ENCODE measurements at regions of chr7 and their contacts with region 1.

Region 1: GRCh38 chr7:143240291-143241168 is 18.7 kb downstream of the TAS2R40 start:
- DNase-seq: peak; percentile 34 to 87 (median 67)
- ATAC-seq: peak; percentile 83 to 94 (median 88)
- H3K4me3 ChIP-seq: no peak overlapping the region
- H3K4me3 Mint-ChIP-seq: no peak overlapping the region
- H3K27ac ChIP-seq: no peak overlapping the region
- H3K27ac Mint-ChIP-seq: peak overlapping the region; percentile 44 to 81
- H3K4me1 ChIP-seq: peaks cover 7 to 12% of the 10 kb centered on the region in 2 experiments
- H3K4me1 Mint-ChIP-seq: peaks cover 31 to 38% (median 33%) of the 10 kb centered on the region in 3 donors
- H3K27me3 ChIP-seq: peaks cover 0 to 6% of the 10 kb centered on the region in 2 experiments
- H3K27me3 Mint-ChIP-seq: peaks cover 9% of the 10 kb centered on the region in 2 donors

Region 2: GRCh38 chr7:143181349-143181748 is 59.2 kb before region 1 on chr7:
- CTCF ChIA-PET with region 1: no interaction called
- POLR2A ChIA-PET with region 1: no interaction called
- DNase-seq: no peak
- ATAC-seq: no peak
- H3K4me3 ChIP-seq: no peak overlapping the region
- H3K4me3 Mint-ChIP-seq: no peak overlapping the region
- H3K27ac ChIP-seq: no peak overlapping the region
- H3K27ac Mint-ChIP-seq: no peak overlapping the region
- H3K4me1 ChIP-seq: no peaks in the 10 kb centered on the region
- H3K4me1 Mint-ChIP-seq: no peaks in the 10 kb centered on the region
- H3K27me3 ChIP-seq: no peaks in the 10 kb centered on the region
- H3K27me3 Mint-ChIP-seq: peaks cover 19% of the 10 kb centered on the region in 2 donors

Region 3: DNA sequence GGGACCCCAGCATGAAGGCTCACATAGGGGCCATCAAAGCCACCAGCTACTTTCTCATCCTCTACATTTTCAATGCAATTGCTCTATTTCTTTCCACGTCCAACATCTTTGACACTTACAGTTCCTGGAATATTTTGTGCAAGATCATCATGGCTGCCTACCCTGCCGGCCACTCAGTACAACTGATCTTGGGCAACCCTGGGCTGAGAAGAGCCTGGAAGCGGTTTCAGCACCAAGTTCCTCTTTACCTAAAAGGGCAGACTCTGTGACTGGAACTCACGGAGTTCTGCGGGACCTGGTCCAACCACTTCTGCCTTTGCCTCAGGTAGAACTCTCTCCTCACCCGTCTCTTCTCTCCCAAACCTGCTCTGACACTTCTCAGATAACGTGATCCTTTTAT is 17.7 kb before region 1 on chr7:
- CTCF ChIA-PET with region 1: interaction called, 5 to 10 read pairs
- POLR2A ChIA-PET with region 1: no interaction called
- DNase-seq: peak in 3 of 35 experiments; percentile 4 to 37 (median 15)
- ATAC-seq: no peak
- H3K4me3 ChIP-seq: no peak overlapping the region
- H3K4me3 Mint-ChIP-seq: no peak overlapping the region
- H3K27ac ChIP-seq: no peak overlapping the region
- H3K27ac Mint-ChIP-seq: no peak overlapping the region
- H3K4me1 ChIP-seq: no peaks in the 10 kb centered on the region
- H3K4me1 Mint-ChIP-seq: no peaks in the 10 kb centered on the region
- H3K27me3 ChIP-seq: peaks cover 0 to 12% of the 10 kb centered on the region in 2 experiments
- H3K27me3 Mint-ChIP-seq: peaks cover 20 to 23% of the 10 kb centered on the region in 2 donors

Region 4: DNA sequence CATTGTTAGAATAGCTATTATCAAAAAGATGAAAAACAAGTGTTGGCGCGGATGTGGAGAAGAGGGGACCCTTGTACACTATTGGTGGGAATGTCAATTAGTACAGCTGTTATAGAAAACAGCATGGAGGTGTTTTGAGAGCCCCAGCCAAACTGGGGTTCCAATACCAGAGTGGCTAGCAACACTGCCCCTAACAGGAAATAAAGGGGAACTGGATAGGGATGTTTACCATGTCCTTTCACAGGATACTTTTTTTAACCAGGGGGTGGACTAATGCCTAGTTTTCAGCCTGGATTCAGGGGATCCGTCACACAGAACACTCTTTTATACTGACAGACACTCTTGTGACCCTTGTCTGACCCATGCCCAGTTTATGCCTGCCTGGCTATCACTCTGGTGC is 15.8 kb after region 1 on chr7:
- CTCF ChIA-PET with region 1: interaction called, 16 to 24 read pairs
- POLR2A ChIA-PET with region 1: interaction called in 1 of 2 experiments, 3 read pairs
- DNase-seq: no peak
- ATAC-seq: no peak
- H3K4me3 ChIP-seq: no peak overlapping the region
- H3K4me3 Mint-ChIP-seq: peak overlapping the region in 1 of 3 donors; percentile 9
- H3K27ac ChIP-seq: peak overlapping the region; percentile 4
- H3K27ac Mint-ChIP-seq: peak overlapping the region; percentile 78 to 88
- H3K4me1 ChIP-seq: peaks cover 17 to 38% of the 10 kb centered on the region in 2 experiments
- H3K4me1 Mint-ChIP-seq: peaks cover 81 to 82% (median 81%) of the 10 kb centered on the region in 3 donors
- H3K27me3 ChIP-seq: no peaks in the 10 kb centered on the region
- H3K27me3 Mint-ChIP-seq: no peaks in the 10 kb centered on the region

Region 5: DNA sequence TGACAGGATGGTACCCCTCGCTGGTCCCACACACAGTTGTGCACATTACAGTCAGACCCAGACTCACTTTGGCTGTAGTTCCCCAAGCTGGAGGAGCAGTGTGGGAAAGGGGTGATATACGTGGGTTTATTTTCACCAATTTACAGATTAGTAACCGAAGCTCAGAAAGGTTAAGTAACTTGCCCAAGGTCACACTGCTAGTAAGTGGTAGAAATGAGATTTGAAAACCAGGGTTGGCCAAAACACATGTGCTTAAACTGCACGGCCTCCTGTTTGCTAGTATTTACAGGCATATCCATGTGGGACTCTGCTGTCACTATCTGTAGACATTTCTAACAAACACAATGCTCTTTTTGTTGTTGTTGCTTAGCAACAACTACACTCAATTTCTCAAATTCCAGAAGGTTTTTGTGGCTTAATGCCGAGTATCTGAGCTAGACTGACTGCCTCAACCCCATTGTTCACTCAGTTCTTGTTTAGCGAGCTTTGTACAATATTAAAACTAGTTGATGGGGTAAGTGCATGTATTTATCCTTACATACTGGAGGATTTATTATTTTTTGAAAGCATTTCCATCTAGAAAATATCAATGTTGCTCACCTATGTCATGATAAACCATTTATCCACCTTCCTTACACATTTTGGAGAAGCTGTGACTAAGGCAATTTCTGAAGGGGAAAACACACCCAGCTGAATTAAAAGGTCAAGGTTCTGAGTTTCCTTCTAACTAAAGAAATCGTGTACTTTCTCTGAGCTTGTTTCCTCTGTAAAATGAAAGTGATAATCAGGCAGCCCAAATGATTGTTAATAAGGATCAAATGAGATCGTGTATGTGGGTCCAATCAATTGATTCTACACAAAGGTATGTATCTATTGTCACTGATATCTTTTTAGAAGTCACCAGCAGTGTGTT is 38.9 kb after region 1 on chr7:
- CTCF ChIA-PET with region 1: interaction called, 7 to 11 read pairs
- POLR2A ChIA-PET with region 1: no interaction called
- DNase-seq: peak in 2 of 35 experiments; percentile 3 to 59
- ATAC-seq: peak; percentile 51 to 88 (median 60)
- H3K4me3 ChIP-seq: peak overlapping the region in 1 of 2 donors; percentile 25
- H3K4me3 Mint-ChIP-seq: peak overlapping the region; percentile 32 to 74 (median 68)
- H3K27ac ChIP-seq: peak overlapping the region; percentile 78
- H3K27ac Mint-ChIP-seq: peak overlapping the region; percentile 82 to 94
- H3K4me1 ChIP-seq: peaks cover 18 to 22% of the 10 kb centered on the region in 2 experiments
- H3K4me1 Mint-ChIP-seq: peaks cover 37 to 41% (median 39%) of the 10 kb centered on the region in 3 donors
- H3K27me3 ChIP-seq: no peaks in the 10 kb centered on the region
- H3K27me3 Mint-ChIP-seq: no peaks in the 10 kb centered on the region

Region 6: GRCh38 chr7:143299840-143300239 is 59.3 kb after region 1 on chr7:
- CTCF ChIA-PET with region 1: interaction called, 50 to 98 read pairs
- POLR2A ChIA-PET with region 1: interaction called in 1 of 2 experiments, 4 read pairs
- DNase-seq: peak; percentile 29 to 78 (median 62)
- ATAC-seq: peak; percentile 94 to 99 (median 98)
- H3K4me3 ChIP-seq: no peak overlapping the region
- H3K4me3 Mint-ChIP-seq: no peak overlapping the region
- H3K27ac ChIP-seq: no peak overlapping the region
- H3K27ac Mint-ChIP-seq: peak overlapping the region; percentile 77 to 79
- H3K4me1 ChIP-seq: peaks cover 10% of the 10 kb centered on the region in 2 experiments
- H3K4me1 Mint-ChIP-seq: peaks cover 42 to 45% (median 45%) of the 10 kb centered on the region in 3 donors
- H3K27me3 ChIP-seq: no peaks in the 10 kb centered on the region
- H3K27me3 Mint-ChIP-seq: no peaks in the 10 kb centered on the region

Region 7: DNA sequence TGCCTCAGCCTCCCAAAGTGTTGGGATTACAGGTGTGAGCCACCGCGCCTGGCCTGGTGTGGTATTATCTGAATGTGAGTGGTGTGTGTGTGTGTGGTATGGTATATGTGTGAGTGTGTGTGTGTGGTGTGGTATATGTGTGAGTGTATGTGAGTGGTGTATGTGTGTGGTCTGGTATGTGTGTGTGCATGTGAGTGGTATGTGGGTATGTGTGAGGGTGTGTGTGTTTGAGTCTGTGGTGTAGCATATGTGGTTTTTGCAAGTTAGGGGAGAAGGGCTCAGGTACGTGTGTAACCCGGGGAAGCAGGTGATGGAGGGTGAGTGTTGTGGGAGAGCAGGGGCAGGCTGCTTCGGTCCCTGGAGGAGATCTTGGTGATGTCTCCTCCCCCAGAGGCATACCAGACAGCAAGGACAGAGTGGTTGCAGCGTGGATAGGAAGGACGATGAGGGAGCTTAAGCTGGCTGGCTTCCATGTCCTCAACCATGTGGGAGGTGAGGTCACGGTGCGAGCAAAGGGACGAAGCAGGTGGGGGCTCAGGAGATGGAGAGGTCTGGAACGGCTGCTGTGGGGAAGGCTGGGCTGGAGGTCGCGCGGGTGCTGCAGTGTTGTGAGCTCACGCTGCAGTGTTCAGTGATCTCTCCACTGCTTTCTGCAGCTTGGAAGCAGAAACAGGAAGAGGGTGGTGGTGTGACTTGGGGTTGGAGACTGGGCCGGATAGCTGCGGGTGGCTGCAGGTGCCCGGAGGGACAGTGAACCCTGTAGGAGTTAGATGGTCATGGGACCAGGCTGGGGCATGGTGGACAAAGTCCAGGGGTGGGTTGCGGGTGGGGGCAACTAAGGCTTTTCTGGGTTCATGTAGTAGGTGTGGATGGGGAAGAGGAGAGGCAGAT is 145.6 kb after region 1 on chr7:
- CTCF ChIA-PET with region 1: interaction called, 4 to 10 read pairs
- POLR2A ChIA-PET with region 1: no interaction called
- DNase-seq: peak in 24 of 35 experiments; percentile 24 to 66 (median 38)
- ATAC-seq: peak; percentile 60 to 68 (median 66)
- H3K4me3 ChIP-seq: peak overlapping the region; percentile 2 to 33
- H3K4me3 Mint-ChIP-seq: no peak overlapping the region
- H3K27ac ChIP-seq: peak overlapping the region; percentile 52
- H3K27ac Mint-ChIP-seq: no peak overlapping the region
- H3K4me1 ChIP-seq: peaks cover 21 to 74% of the 10 kb centered on the region in 2 experiments
- H3K4me1 Mint-ChIP-seq: peaks cover 13 to 18% (median 15%) of the 10 kb centered on the region in 3 donors
- H3K27me3 ChIP-seq: no peaks in the 10 kb centered on the region
- H3K27me3 Mint-ChIP-seq: no peaks in the 10 kb centered on the region

Region 8: DNA sequence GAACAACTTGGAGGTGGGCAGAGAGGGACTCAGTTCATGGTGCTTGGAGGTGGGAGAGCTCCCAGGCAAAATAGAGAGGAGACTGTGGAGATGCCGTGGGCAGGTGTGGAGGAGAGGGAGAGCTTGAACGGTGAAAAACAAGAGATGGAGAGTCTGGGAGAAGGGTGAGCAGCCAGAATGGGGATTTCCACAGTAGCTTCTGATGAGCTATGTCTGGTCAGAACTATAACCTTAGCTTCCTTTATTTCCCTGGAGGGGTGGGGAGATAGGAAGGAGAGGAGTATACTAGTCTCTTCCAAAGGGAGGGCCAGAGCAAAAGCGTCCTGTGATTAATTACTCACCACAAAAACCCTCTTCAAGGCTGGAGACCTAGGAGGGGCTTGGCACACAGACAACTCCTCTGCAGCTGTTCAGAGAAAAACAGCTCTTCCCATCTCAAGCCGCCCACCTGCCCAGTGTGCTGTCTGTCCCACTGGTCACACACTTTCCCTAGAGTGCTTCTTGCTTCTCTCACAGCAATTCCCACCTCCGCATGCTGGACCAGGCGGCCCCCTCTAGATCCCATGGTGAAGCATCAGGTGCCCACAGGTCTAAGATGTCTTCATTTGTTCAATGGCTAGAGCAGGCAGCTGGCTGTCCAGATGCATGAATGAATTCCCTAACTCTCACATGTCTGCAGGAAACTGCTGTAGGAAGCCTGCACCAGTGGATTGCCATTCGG is 279.0 kb after region 1 on chr7:
- CTCF ChIA-PET with region 1: no interaction called
- POLR2A ChIA-PET with region 1: no interaction called
- DNase-seq: no peak
- ATAC-seq: no peak
- H3K4me3 ChIP-seq: no peak overlapping the region
- H3K4me3 Mint-ChIP-seq: no peak overlapping the region
- H3K27ac ChIP-seq: no peak overlapping the region
- H3K27ac Mint-ChIP-seq: no peak overlapping the region
- H3K4me1 ChIP-seq: no peaks in the 10 kb centered on the region
- H3K4me1 Mint-ChIP-seq: no peaks in the 10 kb centered on the region
- H3K27me3 ChIP-seq: peaks cover 0 to 8% of the 10 kb centered on the region in 2 experiments
- H3K27me3 Mint-ChIP-seq: peaks cover 0 to 8% of the 10 kb centered on the region in 2 donors